ENCODE measurements at regions of chr2 and their contacts with region 1.

Region 1: DNA sequence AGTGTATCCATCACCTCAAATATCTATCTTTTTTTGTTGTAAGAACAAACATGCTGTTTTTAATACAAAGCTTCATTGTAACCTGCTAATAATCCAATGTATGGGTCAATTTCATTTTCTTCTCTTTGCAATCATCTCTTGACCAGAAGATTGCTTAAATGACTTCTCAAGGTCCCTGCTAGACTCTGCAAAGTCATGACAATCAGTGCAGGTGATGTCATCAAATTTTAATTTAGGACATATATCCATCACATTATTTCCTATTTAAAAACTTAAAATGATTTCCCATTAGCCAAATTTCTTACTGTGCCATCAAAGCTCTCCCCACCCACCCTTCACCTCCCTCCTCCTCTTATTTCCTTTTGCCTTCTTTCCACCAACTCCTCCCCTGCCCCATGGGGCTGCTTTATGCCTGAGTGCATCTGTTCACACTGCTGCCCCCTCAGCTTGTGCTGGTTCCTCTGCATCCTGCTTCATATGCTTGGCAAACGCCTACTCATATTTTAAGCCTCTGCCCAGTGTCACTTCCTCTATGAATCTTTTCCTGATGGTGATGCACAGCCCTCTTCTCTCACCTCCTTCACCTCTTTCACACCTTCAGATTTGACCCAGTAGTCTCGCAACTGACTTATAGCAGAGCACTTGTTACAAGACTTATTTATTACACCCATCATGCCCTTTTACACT is 20.3 kb downstream of the PLEK start:
- DNase-seq: peak; percentile 79
- ATAC-seq: peak; percentile 82
- H3K4me3 Mint-ChIP-seq: no peak overlapping the region
- H3K27ac Mint-ChIP-seq: peak overlapping the region; percentile 51
- H3K4me1 Mint-ChIP-seq: peaks cover 61% of the 10 kb centered on the region
- H3K27me3 Mint-ChIP-seq: peaks cover 2% of the 10 kb centered on the region
- CTCF ChIP-seq: peak; percentile 29

Region 2: DNA sequence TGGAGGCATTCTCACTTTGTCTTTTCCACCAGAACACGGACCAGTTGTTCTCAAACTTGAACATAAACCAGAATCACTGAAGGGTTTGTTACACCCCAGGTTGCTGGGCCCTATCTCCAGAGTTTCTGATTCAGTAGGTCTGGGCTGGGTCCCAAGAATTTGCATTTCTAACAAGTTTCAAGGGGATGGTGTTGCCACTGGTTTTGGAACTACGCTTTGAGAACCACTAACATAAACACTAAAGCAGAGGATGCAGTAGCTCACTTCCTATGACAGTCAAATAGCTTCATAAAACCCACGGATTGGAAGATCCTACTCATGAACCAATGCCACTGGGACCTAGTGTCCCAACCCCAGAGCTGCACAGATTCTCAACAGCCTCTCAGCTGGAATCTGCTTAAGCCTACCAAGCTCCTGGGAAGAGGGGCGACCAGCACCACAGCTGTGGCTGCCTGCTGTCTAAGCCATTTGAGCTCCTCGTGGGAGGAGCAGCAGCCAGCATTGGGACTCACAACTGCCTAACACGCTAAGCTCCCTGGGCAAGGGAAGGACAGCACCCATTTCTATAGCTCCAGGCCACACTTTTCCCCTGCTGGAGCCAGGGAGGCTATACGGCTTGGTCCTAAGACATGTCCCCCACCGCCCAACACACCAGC is 385.1 kb before region 1 on chr2:
- CTCF ChIA-PET with region 1: no interaction called
- POLR2A ChIA-PET with region 1: no interaction called
- intact Hi-C with region 1: no loop called
- DNase-seq: no peak
- ATAC-seq: no peak
- H3K4me3 Mint-ChIP-seq: no peak overlapping the region
- H3K27ac Mint-ChIP-seq: no peak overlapping the region
- H3K4me1 Mint-ChIP-seq: no peaks in the 10 kb centered on the region
- H3K27me3 Mint-ChIP-seq: peaks cover 20% of the 10 kb centered on the region
- CTCF ChIP-seq: no peak

Region 3: GRCh38 chr2:68423966-68424650 is 38.7 kb after region 1 on chr2:
- CTCF ChIA-PET with region 1: interaction called, 4 read pairs
- POLR2A ChIA-PET with region 1: interaction called, 3 read pairs
- intact Hi-C with region 1: loop called (anchors 5 kb)
- DNase-seq: peak; percentile 33
- ATAC-seq: peak; percentile 86
- H3K4me3 Mint-ChIP-seq: no peak overlapping the region
- H3K27ac Mint-ChIP-seq: no peak overlapping the region
- H3K4me1 Mint-ChIP-seq: peaks cover 19% of the 10 kb centered on the region
- H3K27me3 Mint-ChIP-seq: no peaks in the 10 kb centered on the region
- CTCF ChIP-seq: no peak

Region 4: DNA sequence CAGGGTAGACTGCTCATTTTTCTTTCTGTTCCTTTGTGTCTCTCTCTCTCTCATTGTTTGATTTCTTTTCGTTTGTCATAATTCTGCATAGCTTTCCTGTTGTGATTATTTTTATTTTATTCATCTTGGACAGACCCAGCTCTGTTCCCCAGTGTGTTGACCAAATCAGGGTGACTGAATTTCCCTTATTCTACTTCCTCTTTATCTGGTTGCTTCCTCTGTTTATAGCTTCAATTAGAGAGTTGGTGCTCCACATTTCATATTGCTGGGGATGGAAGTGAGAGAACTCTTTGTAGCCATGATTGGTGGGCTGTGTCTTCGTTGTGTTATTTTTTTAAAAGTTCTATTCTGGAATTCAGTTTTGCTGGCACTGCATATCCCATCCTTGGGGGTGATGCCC is 277.1 kb after region 1 on chr2:
- CTCF ChIA-PET with region 1: no interaction called
- POLR2A ChIA-PET with region 1: no interaction called
- intact Hi-C with region 1: no loop called
- DNase-seq: no peak
- ATAC-seq: no peak
- H3K4me3 Mint-ChIP-seq: no peak overlapping the region
- H3K27ac Mint-ChIP-seq: no peak overlapping the region
- H3K4me1 Mint-ChIP-seq: peaks cover 24% of the 10 kb centered on the region
- H3K27me3 Mint-ChIP-seq: peaks cover 21% of the 10 kb centered on the region
- CTCF ChIP-seq: no peak